ENCODE measurements at regions of chr1 and their contacts with region 1.

Region 1: GRCh38 chr1:77779529-77780281 is at the start of gene MIGA1:
- DNase-seq: peak; percentile 92
- H3K4me3 Mint-ChIP-seq: peak within 1 kb of the TSS; percentile 94
- H3K27ac Mint-ChIP-seq: peak within 1 kb of the TSS; percentile 84
- H3K4me1 Mint-ChIP-seq: peaks cover 4% of the 10 kb centered on the region
- H3K27me3 Mint-ChIP-seq: no peaks in the 10 kb centered on the region
- CTCF ChIP-seq: no peak
- total RNA-seq, gene MIGA1: 13.2 and 19.9 TPM in 2 replicates

Region 2: GRCh38 chr1:77744576-77744975 is 35.1 kb before region 1 on chr1:
- CTCF ChIA-PET with region 1: interaction called, 5 read pairs
- POLR2A ChIA-PET with region 1: no interaction called
- intact Hi-C with region 1: loop called (anchors 1 kb)
- DNase-seq: peak; percentile 48
- H3K4me3 Mint-ChIP-seq: no peak overlapping the region
- H3K27ac Mint-ChIP-seq: peak overlapping the region; percentile 57
- H3K4me1 Mint-ChIP-seq: peaks cover 24% of the 10 kb centered on the region
- H3K27me3 Mint-ChIP-seq: no peaks in the 10 kb centered on the region
- CTCF ChIP-seq: no peak

Measured in MCF 10A (cell line).